Vagina (tissue), 2 donors: ENCODE measurements at regions of chr5 and their contacts with region 1.

Region 1: DNA sequence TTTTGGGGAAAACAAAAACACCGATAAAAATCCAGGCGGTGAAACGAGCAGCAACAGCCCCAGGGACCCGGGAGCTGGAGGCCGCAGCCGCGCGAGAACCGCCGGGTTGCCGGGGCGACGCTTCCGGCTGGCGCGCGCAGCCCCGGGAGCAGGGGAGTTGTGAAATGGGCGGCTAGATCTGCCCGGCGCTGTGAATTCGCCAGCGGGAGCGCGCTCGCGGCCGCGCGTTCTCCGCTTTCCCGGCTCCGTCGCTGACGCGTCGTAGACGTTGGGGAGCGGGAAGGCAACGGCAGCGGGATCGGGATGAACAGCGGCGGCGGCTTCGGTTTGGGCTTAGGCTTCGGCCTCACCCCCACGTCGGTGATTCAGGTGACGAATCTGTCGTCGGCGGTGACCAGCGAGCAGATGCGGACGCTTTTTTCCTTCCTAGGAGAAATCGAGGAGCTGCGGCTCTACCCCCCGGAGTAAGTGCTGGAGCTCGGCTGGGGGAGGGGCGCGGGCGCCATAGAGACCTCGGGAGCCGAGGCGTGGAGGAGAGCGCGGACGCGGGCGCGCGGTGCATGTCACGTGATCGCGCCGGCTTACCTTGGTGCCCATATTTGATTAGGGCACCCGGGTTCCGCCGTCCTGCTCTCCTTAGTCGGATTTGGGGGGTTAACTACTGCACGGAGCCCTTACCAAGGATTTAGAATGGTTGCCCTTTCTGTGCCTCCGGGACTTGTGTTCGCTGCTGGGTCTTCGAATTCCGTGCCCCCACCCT is at the start of gene SREK1:
- DNase-seq: peak in 1 of 2 donors; percentile 94
- H3K4me3 ChIP-seq: peak within 1 kb of the TSS; percentile 83 to 96
- H3K27ac ChIP-seq: peak within 1 kb of the TSS; percentile 99
- H3K4me1 ChIP-seq: peaks cover 38% of the 10 kb centered on the region
- H3K27me3 ChIP-seq: no peaks in the 10 kb centered on the region
- CTCF ChIP-seq: no peak
- POLR2A ChIP-seq: peak; percentile 4 to 61
- total RNA-seq, gene SREK1: 101 TPM

Region 2: GRCh38 chr5:65721720-65722574 is 422.3 kb before region 1 on chr5 and contains the starts of genes NLN and SGTB:
- intact Hi-C with region 1: no loop called
- DNase-seq: no peak
- H3K4me3 ChIP-seq: peak within 1 kb of the TSS; percentile 85 to 90
- H3K27ac ChIP-seq: peak within 1 kb of the TSS; percentile 78
- H3K4me1 ChIP-seq: peaks cover 21% of the 10 kb centered on the region
- H3K27me3 ChIP-seq: no peaks in the 10 kb centered on the region
- CTCF ChIP-seq: no peak
- POLR2A ChIP-seq: no peak
- total RNA-seq, gene NLN: 6.6 TPM
- total RNA-seq, gene SGTB: 6.4 TPM

Region 3: GRCh38 chr5:65925601-65926275 is 218.5 kb before region 1 on chr5:
- intact Hi-C with region 1: loop called (anchors 2 kb)
- DNase-seq: no peak
- H3K4me3 ChIP-seq: peak overlapping the region; percentile 67 to 88
- H3K27ac ChIP-seq: peak overlapping the region; percentile 95
- H3K4me1 ChIP-seq: peaks cover 28% of the 10 kb centered on the region
- H3K27me3 ChIP-seq: no peaks in the 10 kb centered on the region
- CTCF ChIP-seq: no peak
- POLR2A ChIP-seq: peak in 1 of 2 donors; percentile 94

Region 4: DNA sequence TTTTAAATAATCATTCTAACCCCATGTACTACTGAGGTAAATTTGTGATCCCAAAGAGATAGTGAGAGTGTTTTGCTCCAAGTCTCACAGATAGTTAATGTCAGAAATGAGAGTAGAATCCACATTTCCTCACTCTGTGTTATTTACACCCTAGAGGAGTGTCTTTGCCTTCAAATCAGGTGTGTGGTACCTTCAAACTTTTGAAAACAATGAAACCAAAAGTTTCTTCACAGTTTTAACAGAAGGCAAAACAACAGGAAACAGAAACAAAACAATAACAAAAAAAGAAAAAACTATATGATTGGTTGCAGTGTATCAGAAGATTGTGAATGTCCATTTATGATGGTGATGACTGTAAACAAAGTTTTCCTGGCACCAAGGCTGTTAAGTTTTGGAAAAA is 132.0 kb before region 1 on chr5:
- intact Hi-C with region 1: no loop called
- DNase-seq: no peak
- H3K4me3 ChIP-seq: no peak overlapping the region
- H3K27ac ChIP-seq: no peak overlapping the region
- H3K4me1 ChIP-seq: peaks cover 15% of the 10 kb centered on the region
- H3K27me3 ChIP-seq: no peaks in the 10 kb centered on the region
- CTCF ChIP-seq: no peak
- POLR2A ChIP-seq: no peak